ENCODE measurements at regions of chr11 and their contacts with region 1.

Region 1: DNA sequence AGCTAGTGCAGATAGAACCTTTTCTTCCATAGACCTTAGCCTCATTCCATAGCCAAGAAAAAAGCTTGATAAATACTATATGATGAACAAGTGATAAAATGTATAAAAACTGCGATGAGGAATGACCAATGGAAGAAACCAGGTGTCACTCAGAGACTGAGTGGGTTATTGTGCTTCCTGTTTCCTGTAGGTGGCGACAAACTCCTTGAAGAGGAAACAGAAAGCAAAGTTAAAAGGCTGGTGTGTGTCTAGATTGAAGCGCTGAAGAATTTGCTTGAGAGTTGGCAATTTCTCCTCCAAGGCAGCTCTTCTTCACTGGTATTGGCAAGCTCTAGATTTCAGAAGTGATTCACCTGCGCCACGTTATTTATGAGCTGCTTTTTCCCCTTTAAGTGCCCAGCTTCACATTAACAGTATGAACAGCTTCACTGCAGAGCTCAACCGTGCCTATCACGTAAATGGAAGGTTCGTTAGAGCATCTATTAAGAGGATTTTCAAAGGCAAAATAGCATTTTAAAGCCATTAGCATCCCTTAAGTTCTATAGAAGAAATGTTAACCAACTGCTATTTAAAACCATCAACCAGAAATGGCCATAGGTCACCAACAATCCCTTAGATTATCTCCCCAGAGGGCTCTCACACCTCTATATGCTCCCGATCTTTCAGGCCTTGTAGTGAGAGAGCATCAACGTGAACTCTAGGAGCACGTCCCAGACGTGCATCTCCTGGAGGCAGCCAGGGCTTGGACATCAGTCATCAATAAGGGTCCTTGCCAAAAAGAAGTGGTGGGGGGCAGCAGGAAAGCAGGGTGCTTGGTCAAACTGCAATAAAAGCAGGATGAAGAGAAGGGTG is 179.4 kb downstream of the CADM1 start:
- H3K4me3 ChIP-seq: no peak overlapping the region
- H3K27ac ChIP-seq: no peak overlapping the region
- H3K4me1 ChIP-seq: no peaks in the 10 kb centered on the region
- CTCF ChIP-seq: peak; percentile 11; the same call in 1 of the 2 replicates

Region 2: DNA sequence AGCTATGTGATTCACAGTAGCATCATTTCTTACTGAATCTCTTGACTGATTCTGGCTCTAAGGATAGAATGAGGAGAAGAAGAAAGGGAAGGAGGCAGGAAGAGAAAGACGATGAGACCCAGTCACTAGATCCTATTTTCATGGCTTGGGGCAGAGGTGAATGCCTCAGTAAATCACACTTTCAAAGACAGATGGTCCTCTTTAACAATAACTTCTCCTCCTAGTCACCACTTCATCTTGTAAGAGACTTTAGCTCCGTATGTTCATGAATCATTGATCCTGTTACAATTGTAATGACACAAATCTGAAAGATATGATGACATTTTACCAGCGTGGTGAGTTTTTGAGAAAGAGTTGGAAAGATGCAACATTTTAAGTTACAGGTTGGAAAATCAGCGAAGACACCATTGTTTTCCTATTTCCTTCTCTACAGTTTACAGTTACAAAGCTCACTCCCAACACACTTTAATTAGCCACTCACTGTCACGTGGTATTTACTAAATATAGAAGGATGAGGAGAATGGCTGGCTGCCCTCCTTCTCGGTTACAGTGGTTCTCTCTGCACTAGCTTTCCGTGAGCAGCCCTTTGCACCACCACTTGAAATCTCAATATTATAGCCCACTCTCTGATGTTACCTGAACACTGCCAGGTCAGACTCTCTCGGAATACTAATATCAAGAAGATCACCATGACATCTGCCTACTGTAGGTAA is 26.4 kb before region 1 on chr11:
- CTCF ChIA-PET with region 1: no interaction called
- POLR2A ChIA-PET with region 1: no interaction called
- H3K4me3 ChIP-seq: no peak overlapping the region
- H3K27ac ChIP-seq: no peak overlapping the region
- H3K4me1 ChIP-seq: peaks cover 4% of the 10 kb centered on the region
- CTCF ChIP-seq: no peak

Region 3: DNA sequence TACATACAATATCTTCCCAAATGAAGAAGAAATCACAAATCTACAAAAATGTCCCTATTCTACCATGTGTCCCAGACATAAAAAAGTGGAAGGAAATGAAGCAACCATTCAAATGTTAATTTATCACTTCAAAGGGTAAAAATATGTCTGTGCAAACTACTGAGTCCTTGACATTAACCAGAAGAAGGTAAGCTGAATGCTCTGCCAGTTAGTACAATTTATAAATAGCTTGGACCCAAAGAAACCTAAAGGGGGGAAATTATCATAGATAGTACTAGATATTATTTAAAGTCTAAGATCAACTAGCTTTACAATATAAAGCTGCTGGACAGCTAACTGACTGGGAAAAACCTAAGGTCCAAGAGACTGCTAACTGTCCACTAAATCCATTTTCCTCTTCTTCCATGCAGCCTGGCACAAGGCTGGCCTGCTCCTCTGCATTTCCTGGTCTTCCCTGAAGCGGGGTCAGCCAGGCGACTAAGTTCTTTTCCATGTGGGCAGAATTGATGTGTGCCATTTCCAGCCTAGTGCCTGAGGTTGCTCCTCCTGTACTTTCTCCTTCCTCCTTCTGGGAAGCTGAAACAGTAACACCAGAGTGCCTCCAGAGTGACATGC is 11.5 kb before region 1 on chr11:
- CTCF ChIA-PET with region 1: interaction called, 13 read pairs
- POLR2A ChIA-PET with region 1: no interaction called
- H3K4me3 ChIP-seq: no peak overlapping the region
- H3K27ac ChIP-seq: no peak overlapping the region
- H3K4me1 ChIP-seq: peaks cover 6% of the 10 kb centered on the region
- CTCF ChIP-seq: no peak

Region 4: GRCh38 chr11:115334932-115335788 is 10.4 kb after region 1 on chr11:
- CTCF ChIA-PET with region 1: interaction called, 27 read pairs
- POLR2A ChIA-PET with region 1: no interaction called
- H3K4me3 ChIP-seq: no peak overlapping the region
- H3K27ac ChIP-seq: no peak overlapping the region
- H3K4me1 ChIP-seq: no peaks in the 10 kb centered on the region
- CTCF ChIP-seq: no peak

Region 5: GRCh38 chr11:115678942-115679341 is 354.1 kb after region 1 on chr11:
- CTCF ChIA-PET with region 1: interaction called, 12 read pairs
- POLR2A ChIA-PET with region 1: no interaction called
- H3K4me3 ChIP-seq: no peak overlapping the region
- H3K27ac ChIP-seq: no peak overlapping the region
- H3K4me1 ChIP-seq: no peaks in the 10 kb centered on the region
- CTCF ChIP-seq: no peak